CD14-positive monocyte (primary cell): ENCODE measurements at regions of chr15 and their contacts with region 1.

Region 1: DNA sequence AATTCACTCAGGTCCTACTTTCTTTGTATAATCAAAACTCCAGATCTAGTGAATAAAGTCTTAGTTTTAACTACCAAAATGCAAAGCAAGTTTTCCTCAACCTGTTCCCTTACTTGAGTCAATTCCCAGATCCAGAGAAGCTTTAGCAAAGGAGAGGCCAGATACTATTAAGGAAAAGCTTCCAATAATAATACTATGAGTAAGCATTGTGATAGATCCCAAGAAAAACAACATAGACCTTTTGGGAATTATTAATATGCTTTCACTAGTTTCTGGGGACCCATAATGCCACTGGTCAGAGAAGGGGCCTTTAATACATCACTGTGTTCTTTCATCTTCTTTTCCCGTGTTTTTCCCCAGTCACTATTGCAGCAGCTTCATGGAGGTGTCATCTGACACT is 339.9 kb upstream of the CDIN1 start:
- DNase-seq: no peak
- H3K4me3 ChIP-seq: no peak overlapping the region
- H3K4me3 Mint-ChIP-seq: no peak overlapping the region
- H3K27ac ChIP-seq: no peak overlapping the region
- H3K27ac Mint-ChIP-seq: no peak overlapping the region
- H3K4me1 ChIP-seq: no peaks in the 10 kb centered on the region
- H3K4me1 Mint-ChIP-seq: no peaks in the 10 kb centered on the region
- H3K27me3 ChIP-seq: no peaks in the 10 kb centered on the region
- H3K27me3 Mint-ChIP-seq: no peaks in the 10 kb centered on the region
- CTCF ChIP-seq: no peak

Region 2: GRCh38 chr15:36117296-36117787 is 122.2 kb before region 1 on chr15:
- intact Hi-C with region 1: no loop called
- DNase-seq: no peak
- H3K4me3 ChIP-seq: no peak overlapping the region
- H3K4me3 Mint-ChIP-seq: no peak overlapping the region
- H3K27ac ChIP-seq: no peak overlapping the region
- H3K27ac Mint-ChIP-seq: no peak overlapping the region
- H3K4me1 ChIP-seq: no peaks in the 10 kb centered on the region
- H3K4me1 Mint-ChIP-seq: no peaks in the 10 kb centered on the region
- H3K27me3 ChIP-seq: no peaks in the 10 kb centered on the region
- H3K27me3 Mint-ChIP-seq: peaks cover 0 to 3% (median 0%) of the 10 kb centered on the region in 3 donors
- CTCF ChIP-seq: no peak

Region 3: GRCh38 chr15:36218322-36218721 is 21.2 kb before region 1 on chr15:
- intact Hi-C with region 1: loop called in 1 of 2 experiments (anchors 2 kb)
- DNase-seq: no peak
- H3K4me3 ChIP-seq: no peak overlapping the region
- H3K4me3 Mint-ChIP-seq: no peak overlapping the region
- H3K27ac ChIP-seq: no peak overlapping the region
- H3K27ac Mint-ChIP-seq: no peak overlapping the region
- H3K4me1 ChIP-seq: no peaks in the 10 kb centered on the region
- H3K4me1 Mint-ChIP-seq: no peaks in the 10 kb centered on the region
- H3K27me3 ChIP-seq: no peaks in the 10 kb centered on the region
- H3K27me3 Mint-ChIP-seq: no peaks in the 10 kb centered on the region
- CTCF ChIP-seq: no peak